ENCODE measurements at regions of chr14 and their contacts with region 1.

Region 1: DNA sequence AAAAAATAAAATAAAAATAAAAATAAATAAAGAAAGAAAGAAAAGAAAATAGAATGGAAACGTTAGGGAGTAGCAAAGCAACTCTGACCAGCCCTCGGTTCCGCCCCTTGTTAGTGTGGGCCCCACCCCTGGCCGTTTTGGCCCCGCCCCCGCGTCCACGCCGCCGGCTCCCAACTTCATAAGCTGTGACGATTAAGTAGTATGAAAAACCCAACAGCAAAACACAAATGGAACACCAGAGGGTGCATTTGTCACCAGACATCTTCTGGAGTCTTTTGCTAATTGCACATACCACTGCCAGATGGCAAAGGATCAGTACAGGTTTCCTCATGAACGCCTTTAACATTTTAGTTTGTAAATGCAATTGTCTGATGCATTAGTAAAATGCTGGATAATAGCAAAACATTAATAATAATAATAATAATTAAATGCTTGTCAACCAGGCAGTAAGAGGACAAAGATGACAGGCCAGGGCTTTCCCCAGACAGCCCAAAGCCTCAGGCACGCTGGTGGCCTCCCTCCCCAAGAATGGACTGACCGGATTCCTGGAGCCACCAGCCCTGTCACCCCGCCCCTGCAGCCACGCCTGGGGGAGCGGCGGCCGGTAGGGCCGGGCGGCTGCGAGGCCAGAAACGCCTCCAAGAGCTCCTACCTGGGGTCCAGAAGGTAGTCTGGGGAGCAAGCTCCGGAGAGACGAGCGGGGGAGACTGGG is 23.6 kb downstream of the HSP90AA1 start:
- DNase-seq: peak; percentile 87
- H3K4me3 Mint-ChIP-seq: no peak overlapping the region
- H3K27ac Mint-ChIP-seq: no peak overlapping the region
- H3K4me1 Mint-ChIP-seq: peaks cover 2% of the 10 kb centered on the region
- H3K27me3 Mint-ChIP-seq: no peaks in the 10 kb centered on the region

Region 2: GRCh38 chr14:102096214-102097114 is 33.2 kb after region 1 on chr14:
- intact Hi-C with region 1: loop called (anchors 1 kb)
- DNase-seq: peak; percentile 90
- H3K4me3 Mint-ChIP-seq: no peak overlapping the region
- H3K27ac Mint-ChIP-seq: peak overlapping the region; percentile 66
- H3K4me1 Mint-ChIP-seq: peaks cover 21% of the 10 kb centered on the region
- H3K27me3 Mint-ChIP-seq: peaks cover 2% of the 10 kb centered on the region